Transverse colon (tissue), 4 donors: ENCODE measurements at regions of chr9 and their contacts with region 1.

Region 1: DNA sequence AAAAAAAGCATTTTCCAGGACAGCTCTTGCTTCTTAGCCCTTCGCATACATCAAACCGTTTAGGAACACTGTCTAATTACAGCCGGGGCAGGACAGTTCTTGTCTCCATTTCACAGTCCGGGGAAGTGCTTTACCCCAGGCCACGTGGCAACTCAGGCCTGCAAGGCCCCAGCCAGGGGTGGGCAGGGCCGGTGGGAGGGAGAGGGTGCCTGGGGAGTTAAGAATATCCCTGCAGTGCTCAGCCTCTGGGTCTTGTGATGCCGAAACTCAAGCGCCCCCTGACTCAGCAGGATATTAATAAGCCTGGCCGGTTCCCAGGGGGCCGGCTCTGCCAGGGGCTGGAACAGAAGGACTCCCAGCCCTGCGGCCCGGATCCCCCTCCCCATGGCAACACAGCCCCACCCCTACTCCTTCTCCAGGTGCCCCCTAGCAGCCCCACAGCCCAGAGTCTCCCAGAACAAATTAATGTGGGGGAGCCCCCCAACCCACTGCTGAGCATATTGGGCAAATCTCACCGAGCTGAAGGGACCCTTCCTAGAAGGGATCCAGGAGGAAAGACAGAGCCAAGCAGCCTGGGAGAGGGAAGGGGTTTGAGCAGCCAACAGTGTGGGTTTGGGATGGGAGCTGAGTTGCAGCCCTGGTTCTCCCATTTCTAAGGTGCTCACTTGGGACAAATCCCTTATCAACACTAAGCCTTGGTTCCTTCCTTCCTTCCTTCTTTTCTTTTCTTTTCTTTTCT is 45.3 kb downstream of the PLPP7 start:
- DNase-seq: no peak
- H3K4me3 ChIP-seq: no peak overlapping the region
- H3K27ac ChIP-seq: no peak overlapping the region
- H3K4me1 ChIP-seq: peaks cover 0 to 6% (median 0%) of the 10 kb centered on the region in 4 donors
- H3K27me3 ChIP-seq: no peaks in the 10 kb centered on the region
- CTCF ChIP-seq: no peak
- EP300 ChIP-seq: no peak
- POLR2A ChIP-seq: no peak

Region 2: DNA sequence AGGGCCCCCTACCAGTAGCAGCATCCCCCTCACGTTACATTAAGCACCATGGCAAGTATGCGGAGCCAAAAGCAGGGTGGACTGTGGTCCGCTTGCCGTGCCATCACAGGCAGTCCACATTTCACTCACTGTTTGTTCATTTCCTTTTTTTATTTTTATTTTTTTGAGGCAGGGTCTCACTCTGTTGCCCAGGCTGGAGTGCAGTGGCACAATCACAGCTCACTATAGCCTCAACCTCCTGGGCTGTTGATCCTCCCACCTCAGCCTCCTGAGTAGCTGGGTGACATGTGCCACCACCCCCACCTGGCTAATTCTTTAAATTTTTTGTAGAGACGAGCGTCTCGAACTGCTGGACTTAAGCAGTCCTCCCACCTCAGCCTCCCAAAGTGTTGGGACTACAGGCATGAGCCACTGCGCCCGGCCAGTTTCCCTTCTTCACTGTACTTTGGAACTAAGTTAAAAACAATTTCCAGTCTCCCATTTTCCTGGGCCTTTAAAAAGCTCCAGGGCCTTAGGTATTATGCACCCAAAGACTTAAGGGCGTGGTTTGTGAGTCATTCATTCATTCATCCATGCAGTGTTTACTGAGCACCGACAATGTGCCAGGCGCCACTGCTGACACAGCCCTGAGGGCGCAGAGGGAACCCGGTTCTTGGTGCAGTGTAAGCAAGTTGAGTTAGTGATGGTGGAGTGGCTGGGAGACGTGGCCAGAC is 1649.4 kb before region 1 on chr9:
- in situ Hi-C with region 1: no loop called
- intact Hi-C with region 1: loop called (anchors 10 kb)
- DNase-seq: no peak
- H3K4me3 ChIP-seq: no peak overlapping the region
- H3K27ac ChIP-seq: no peak overlapping the region
- H3K4me1 ChIP-seq: peaks cover 0 to 5% (median 0%) of the 10 kb centered on the region in 4 donors
- H3K27me3 ChIP-seq: peaks cover 3% of the 10 kb centered on the region
- CTCF ChIP-seq: no peak
- EP300 ChIP-seq: no peak
- POLR2A ChIP-seq: no peak

Region 3: GRCh38 chr9:130990978-130991777 is 343.6 kb before region 1 on chr9:
- in situ Hi-C with region 1: no loop called
- intact Hi-C with region 1: no loop called
- DNase-seq: no peak
- H3K4me3 ChIP-seq: no peak overlapping the region
- H3K27ac ChIP-seq: no peak overlapping the region
- H3K4me1 ChIP-seq: no peaks in the 10 kb centered on the region
- H3K27me3 ChIP-seq: peaks cover 30% of the 10 kb centered on the region
- CTCF ChIP-seq: no peak
- EP300 ChIP-seq: no peak
- POLR2A ChIP-seq: no peak

Region 4: GRCh38 chr9:131046581-131047202 is 288.1 kb before region 1 on chr9:
- in situ Hi-C with region 1: loop called in 3 of 4 experiments (anchors 10 to 25 kb)
- intact Hi-C with region 1: no loop called
- DNase-seq: peak; percentile 62
- H3K4me3 ChIP-seq: no peak overlapping the region
- H3K27ac ChIP-seq: no peak overlapping the region
- H3K4me1 ChIP-seq: peaks cover 0 to 5% (median 2%) of the 10 kb centered on the region in 4 donors
- H3K27me3 ChIP-seq: peaks cover 12% of the 10 kb centered on the region
- CTCF ChIP-seq: peak; percentile 80 to 92 (median 87)
- EP300 ChIP-seq: no peak
- POLR2A ChIP-seq: no peak

Region 5: GRCh38 chr9:131056781-131057506 is 277.9 kb before region 1 on chr9:
- in situ Hi-C with region 1: loop called in 3 of 4 experiments (anchors 10 to 25 kb)
- intact Hi-C with region 1: loop called (anchors 5 kb)
- DNase-seq: no peak
- H3K4me3 ChIP-seq: no peak overlapping the region
- H3K27ac ChIP-seq: no peak overlapping the region
- H3K4me1 ChIP-seq: no peaks in the 10 kb centered on the region
- H3K27me3 ChIP-seq: peaks cover 5% of the 10 kb centered on the region
- CTCF ChIP-seq: no peak
- EP300 ChIP-seq: no peak
- POLR2A ChIP-seq: no peak

Region 6: GRCh38 chr9:131178382-131178781 is 156.4 kb before region 1 on chr9:
- in situ Hi-C with region 1: loop called (anchors 5 to 10 kb)
- intact Hi-C with region 1: loop called (anchors 5 kb)
- DNase-seq: peak; percentile 68
- H3K4me3 ChIP-seq: no peak overlapping the region
- H3K27ac ChIP-seq: no peak overlapping the region
- H3K4me1 ChIP-seq: peaks cover 0 to 4% (median 0%) of the 10 kb centered on the region in 4 donors
- H3K27me3 ChIP-seq: no peaks in the 10 kb centered on the region
- CTCF ChIP-seq: peak; percentile 84 to 90 (median 85)
- EP300 ChIP-seq: no peak
- POLR2A ChIP-seq: no peak

Region 7: DNA sequence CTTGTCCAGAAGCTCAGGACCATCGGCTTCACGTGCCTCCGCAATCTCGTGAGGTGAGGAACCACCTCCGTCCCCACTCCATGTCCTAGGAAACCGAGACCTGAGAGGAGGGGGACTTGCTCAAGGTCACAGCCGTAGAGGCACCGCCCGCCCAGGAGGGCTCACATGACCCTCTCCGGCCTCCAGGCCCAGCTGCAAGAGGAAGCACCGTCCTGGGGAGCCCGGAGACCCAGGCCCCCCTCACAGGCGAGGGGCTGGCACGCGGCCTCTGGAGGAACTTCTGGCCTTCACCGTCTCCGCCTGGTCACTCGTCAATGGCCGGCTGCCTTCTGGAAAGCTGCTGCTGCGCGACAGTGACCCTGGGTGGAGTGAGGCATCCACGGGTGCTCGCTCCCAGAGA is 82.7 kb before region 1 on chr9:
- in situ Hi-C with region 1: no loop called
- intact Hi-C with region 1: no loop called
- DNase-seq: no peak
- H3K4me3 ChIP-seq: peak overlapping the region in 2 of 4 donors; percentile 12 to 36
- H3K27ac ChIP-seq: peak overlapping the region; percentile 37 to 76 (median 66)
- H3K4me1 ChIP-seq: peaks cover 0 to 19% (median 1%) of the 10 kb centered on the region in 4 donors
- H3K27me3 ChIP-seq: no peaks in the 10 kb centered on the region
- CTCF ChIP-seq: no peak
- EP300 ChIP-seq: no peak
- POLR2A ChIP-seq: no peak

Region 8: GRCh38 chr9:131270171-131271015 is 64.4 kb before region 1 on chr9:
- in situ Hi-C with region 1: no loop called
- intact Hi-C with region 1: no loop called
- DNase-seq: peak; percentile 67
- H3K4me3 ChIP-seq: no peak overlapping the region
- H3K27ac ChIP-seq: peak overlapping the region; percentile 70 to 84 (median 80)
- H3K4me1 ChIP-seq: peaks cover 0 to 24% (median 3%) of the 10 kb centered on the region in 4 donors
- H3K27me3 ChIP-seq: peaks cover 11% of the 10 kb centered on the region
- CTCF ChIP-seq: no peak
- EP300 ChIP-seq: no peak
- POLR2A ChIP-seq: peak; percentile 35

Region 9: DNA sequence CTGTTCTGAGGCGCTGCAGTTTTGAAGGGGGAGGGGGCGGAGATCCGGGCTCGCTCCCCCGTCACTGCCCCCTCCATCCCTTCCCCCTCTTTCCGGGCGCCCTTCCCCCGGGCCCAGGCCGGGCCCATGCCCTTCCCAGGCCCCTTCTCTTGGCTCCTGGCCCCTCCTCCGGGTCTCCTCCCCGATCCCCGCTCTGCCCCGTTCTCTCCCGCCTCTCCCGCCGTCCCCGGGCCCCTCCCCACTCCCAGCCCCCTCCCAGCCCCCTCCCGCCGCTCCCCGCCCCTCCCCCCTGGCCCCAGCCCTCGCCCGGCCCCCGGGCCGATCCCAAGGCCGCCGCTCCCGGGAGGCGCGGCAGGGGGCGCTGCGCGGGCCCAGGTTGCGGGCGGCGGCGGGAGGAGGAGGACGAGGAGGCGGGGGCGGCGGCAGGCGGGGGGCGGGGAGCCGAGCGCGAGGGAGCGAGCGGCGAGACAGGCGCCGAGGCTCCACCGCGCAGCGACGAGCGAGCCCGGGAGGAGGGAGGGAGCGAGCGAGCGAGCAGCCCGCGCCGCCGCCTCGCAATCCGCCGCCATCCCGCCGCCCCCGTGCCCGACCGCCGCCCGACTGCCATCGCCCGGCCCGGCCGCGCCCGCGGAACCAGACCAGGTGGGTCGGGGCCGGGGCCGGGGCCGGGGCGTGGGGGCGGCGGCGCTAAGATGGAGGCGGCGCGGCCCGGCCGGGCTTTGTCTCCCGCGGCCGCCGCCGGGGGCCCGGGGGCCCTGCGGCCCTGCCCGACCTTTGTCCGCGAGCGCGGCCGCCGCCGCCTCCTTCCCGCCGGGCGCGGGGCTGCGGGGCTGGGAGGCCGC is 59.0 kb after region 1 on chr9 and contains the start of gene PRRC2B:
- in situ Hi-C with region 1: no loop called
- intact Hi-C with region 1: no loop called
- DNase-seq: peak; percentile 89
- H3K4me3 ChIP-seq: peak within 1 kb of the TSS; percentile 75 to 98 (median 82)
- H3K27ac ChIP-seq: peak within 1 kb of the TSS; percentile 98 to 100 (median 99)
- H3K4me1 ChIP-seq: peaks cover 30 to 49% (median 43%) of the 10 kb centered on the region in 4 donors
- H3K27me3 ChIP-seq: no peaks in the 10 kb centered on the region
- CTCF ChIP-seq: peak in 3 of 5 experiments; percentile 46 to 63 (median 56)
- EP300 ChIP-seq: no peak
- POLR2A ChIP-seq: no peak
- total RNA-seq, gene PRRC2B: 73.7 to 171 (median 98.9) TPM